Right ventricle myocardium inferior (tissue), 1 donor: ENCODE measurements at regions of chr10 and their contacts with region 1.

Region 1: DNA sequence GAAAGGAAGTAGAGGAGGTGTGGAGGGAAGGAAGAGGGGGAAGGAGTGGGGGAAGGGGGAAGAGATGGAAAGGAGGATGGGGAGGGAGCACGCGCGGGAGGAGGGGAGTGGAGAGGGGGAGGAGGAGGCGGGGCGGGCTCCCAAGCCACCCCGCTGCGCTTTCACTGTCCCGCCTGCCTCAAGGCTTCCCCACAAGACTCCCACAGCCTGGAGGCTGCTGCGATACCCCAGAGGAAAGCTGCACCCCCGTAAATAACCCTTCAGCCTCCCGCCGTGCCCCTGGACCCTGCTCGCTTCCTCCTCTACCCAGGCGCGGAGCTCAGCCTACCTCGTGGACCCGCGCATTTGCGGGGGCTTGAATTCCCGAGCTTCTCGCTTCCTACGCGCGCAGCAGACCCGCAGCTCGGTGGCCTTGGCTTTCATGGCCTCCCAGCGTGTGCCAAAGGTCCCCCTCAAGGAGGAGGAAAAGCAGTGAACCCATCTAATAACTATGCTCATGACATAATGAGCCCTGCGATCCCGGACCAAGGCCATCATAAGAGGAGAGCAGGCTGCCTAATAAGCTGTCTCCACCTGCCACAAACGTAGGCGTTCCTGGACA is at the start of gene C10orf67:
- DNase-seq: no peak
- ATAC-seq: peak; percentile 80
- total RNA-seq, gene C10orf67: 0.51 TPM

Region 2: DNA sequence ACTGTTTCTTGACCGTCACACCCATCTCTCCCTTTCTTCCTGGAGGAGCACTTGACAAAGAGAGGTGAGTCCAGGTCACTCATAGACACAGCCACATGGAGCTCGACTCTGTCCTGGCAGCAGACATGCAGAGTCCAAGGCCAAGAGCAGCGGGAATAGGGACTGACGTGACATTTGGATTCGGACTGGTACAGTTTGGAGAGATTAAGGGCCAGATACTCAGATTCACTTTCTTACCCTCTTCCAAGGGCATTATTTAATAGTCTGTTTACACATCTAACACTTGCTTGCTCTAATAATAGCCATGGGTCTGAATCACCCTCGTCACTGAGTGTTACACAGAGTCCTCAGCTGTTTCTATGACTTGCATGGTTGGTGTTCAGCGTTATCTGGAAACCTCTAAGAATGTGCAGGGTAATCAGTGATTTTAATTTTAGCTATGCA is 55.4 kb after region 1 on chr10:
- intact Hi-C with region 1: loop called (anchors 1 kb)
- DNase-seq: no peak
- ATAC-seq: peak; percentile 95

Region 3: GRCh38 chr10:23438550-23439441 is 94.5 kb after region 1 on chr10 and contains the start of gene OTUD1:
- intact Hi-C with region 1: loop called (anchors 1 kb)
- DNase-seq: peak; percentile 100
- ATAC-seq: peak; percentile 95
- total RNA-seq, gene OTUD1: 13.3 TPM